HEK293 (cell line): ENCODE measurements at regions of chr13 and their contacts with region 1.

Region 1: GRCh38 chr13:27782151-27782550 is 10.1 kb upstream of the GSX1 start:
- H3K4me3 ChIP-seq: no peak overlapping the region
- H3K27ac ChIP-seq: no peak overlapping the region
- H3K4me1 ChIP-seq: no peaks in the 10 kb centered on the region
- CTCF ChIP-seq: no peak

Region 2: GRCh38 chr13:27442071-27442647 is 340.0 kb before region 1 on chr13:
- CTCF ChIA-PET with region 1: no interaction called
- POLR2A ChIA-PET with region 1: no interaction called
- H3K4me3 ChIP-seq: no peak overlapping the region
- H3K27ac ChIP-seq: no peak overlapping the region
- H3K4me1 ChIP-seq: no peaks in the 10 kb centered on the region
- CTCF ChIP-seq: no peak

Region 3: DNA sequence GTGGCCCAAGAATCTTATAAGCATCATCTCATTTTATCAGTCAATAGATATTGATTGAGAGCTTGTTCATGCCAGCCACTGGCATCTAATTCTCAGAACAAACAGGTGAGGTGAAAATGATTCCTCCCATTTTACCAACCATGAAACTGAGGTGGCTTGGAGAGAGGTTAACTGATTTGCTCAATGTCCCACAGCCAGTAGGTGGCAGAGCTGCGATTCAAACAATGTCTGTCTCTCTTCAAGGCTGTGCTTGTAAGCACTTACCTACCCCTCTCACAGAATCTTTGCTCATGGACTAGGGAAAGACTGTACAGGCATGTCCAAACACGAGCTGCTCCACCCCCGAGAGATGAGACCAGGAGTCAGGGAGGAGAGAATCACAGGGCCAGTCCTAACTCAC is 11.3 kb before region 1 on chr13:
- CTCF ChIA-PET with region 1: interaction called, 19 read pairs
- POLR2A ChIA-PET with region 1: no interaction called
- H3K4me3 ChIP-seq: no peak overlapping the region
- H3K27ac ChIP-seq: no peak overlapping the region
- H3K4me1 ChIP-seq: no peaks in the 10 kb centered on the region
- CTCF ChIP-seq: peak; percentile 34

Region 4: GRCh38 chr13:27792393-27793218 is 10.5 kb after region 1 on chr13 and contains the start of gene GSX1:
- CTCF ChIA-PET with region 1: no interaction called
- POLR2A ChIA-PET with region 1: no interaction called
- H3K4me3 ChIP-seq: peak within 1 kb of the TSS; percentile 12
- H3K27ac ChIP-seq: no peak within 1 kb of the TSS
- H3K4me1 ChIP-seq: no peaks in the 10 kb centered on the region; the same call in 1 of the 2 replicates
- CTCF ChIP-seq: 0 out of 2 replicates have a peak, but pooled peaks have one; percentile 16

Region 5: DNA sequence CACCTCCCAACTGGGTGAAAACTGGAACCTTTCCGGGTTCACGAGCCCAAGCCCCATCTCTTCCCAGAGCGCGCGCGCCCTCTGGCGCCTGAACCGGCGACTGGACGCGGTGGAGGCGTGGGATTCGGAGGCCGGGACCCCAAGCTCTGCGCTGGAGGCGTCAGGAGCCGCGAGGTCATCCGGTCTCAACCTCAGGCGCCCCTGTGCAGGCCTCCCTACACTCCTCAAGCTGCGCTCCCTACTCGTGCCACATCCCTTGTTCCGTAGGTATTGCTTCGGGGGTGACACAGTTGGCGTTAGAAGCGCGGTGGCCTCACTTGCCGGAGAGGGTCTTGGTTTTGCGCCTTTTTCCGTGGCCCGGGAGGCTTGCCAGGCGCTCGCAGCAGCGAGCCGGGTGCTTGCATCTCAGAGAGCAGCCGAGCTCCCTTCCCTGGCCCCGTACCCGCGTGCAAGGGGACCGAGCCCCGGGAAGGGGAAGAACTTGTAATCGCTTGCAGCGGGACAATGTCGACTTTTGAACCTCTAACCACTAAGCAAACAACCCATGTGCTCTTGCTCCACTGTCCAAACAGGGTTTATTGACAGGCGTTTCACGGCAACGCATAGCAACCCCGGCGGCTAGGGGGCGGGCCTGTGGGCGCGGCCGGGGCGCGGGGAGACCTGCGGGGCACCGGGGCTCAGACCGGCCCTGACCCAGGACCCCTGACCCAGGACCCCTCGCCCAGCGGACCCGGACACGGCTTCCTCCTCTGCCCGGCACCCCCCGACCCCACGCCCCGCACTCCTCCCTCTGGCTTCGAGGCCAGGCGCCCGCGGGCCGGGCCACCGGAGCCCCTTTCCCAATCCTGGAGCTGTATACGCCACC is 178.4 kb after region 1 on chr13:
- CTCF ChIA-PET with region 1: no interaction called
- POLR2A ChIA-PET with region 1: no interaction called
- H3K4me3 ChIP-seq: peak overlapping the region; percentile 31
- H3K27ac ChIP-seq: peak overlapping the region; percentile 37; the same call in 1 of the 2 replicates
- H3K4me1 ChIP-seq: no peaks in the 10 kb centered on the region; the same call in 1 of the 2 replicates
- CTCF ChIP-seq: peak; percentile 13; the same call in 1 of the 2 replicates

Region 6: DNA sequence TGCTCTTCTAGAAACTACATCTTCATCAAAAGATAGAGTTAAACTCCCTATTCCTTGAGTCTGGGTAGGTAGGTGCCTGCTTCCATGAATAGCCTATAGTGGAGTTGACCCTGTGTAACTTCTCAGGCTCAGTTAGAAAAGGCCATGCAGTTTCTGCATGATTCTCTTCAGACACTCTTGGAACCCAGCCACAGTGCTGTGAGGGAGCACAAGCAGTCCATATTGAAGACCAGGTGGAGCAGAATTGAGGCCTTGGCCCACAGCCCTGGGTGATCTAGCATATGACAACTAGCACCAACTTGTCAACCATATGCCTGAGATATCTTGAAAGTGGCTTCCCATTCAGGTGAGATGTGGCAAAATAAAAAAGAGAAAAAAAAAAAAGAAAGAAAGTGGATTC is 345.9 kb after region 1 on chr13:
- CTCF ChIA-PET with region 1: no interaction called
- POLR2A ChIA-PET with region 1: no interaction called
- H3K4me3 ChIP-seq: no peak overlapping the region
- H3K27ac ChIP-seq: no peak overlapping the region
- H3K4me1 ChIP-seq: no peaks in the 10 kb centered on the region
- CTCF ChIP-seq: no peak